ENCODE measurements at regions of chr2 and their contacts with region 1.

Region 1: DNA sequence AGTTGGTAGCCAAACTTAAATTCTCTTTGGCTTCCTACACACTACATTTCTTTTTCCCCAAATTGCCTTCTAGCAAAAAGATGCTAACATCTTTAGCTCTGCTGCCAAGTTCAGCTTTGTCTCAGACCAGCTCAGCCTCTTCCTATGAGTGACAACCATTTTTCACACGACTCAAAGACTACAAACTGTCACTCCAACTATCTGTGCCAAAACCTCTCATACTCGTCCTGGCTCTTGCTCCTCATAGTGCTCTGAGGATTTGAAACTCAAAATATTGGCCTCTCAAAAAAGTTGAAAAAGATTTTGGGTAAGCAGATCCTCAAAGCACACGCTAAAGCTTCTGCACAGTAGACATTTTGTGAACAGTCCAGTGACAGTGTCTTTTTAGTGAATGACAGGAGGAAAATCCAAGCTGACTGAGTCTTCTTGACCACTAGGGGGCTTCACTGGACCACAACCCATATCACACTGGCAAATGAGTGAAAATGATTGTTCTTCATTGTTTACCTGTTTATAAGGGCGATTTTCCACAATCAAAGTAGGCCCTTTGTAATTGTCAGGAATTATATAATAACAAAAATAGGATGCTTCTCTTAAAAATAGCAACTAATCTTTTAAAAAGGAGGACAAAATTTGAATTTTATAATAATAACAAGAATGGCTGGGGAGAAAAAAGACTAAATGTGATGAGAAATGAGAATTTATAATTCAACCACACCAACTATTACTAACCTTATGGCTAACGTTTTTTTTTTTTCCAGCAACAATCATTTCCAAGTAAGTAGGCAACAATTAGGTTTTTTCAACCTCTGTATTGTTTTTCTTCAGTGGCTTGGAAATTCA is 85.5 kb upstream of the PGAP1 start:
- DNase-seq: peak in 5 of 7 donors; percentile 22 to 60 (median 31)
- H3K4me3 ChIP-seq: no peak overlapping the region
- H3K27ac ChIP-seq: no peak overlapping the region
- H3K4me1 ChIP-seq: peaks cover 0 to 4% of the 10 kb centered on the region in 2 donors
- H3K27me3 ChIP-seq: no peaks in the 10 kb centered on the region
- CTCF ChIP-seq: peak; percentile 68 to 81 (median 76)
- POLR2A ChIP-seq: no peak

Region 2: GRCh38 chr2:197184959-197185586 is 173.1 kb after region 1 on chr2:
- intact Hi-C with region 1: loop called in 1 of 2 experiments (anchors 10 kb)
- DNase-seq: peak; percentile 94 to 99 (median 98)
- H3K4me3 ChIP-seq: no peak overlapping the region
- H3K27ac ChIP-seq: peak overlapping the region; percentile 20 to 87 (median 51)
- H3K4me1 ChIP-seq: peaks cover 9 to 24% of the 10 kb centered on the region in 2 donors
- H3K27me3 ChIP-seq: no peaks in the 10 kb centered on the region
- CTCF ChIP-seq: peak in 1 of 6 experiments; percentile 9
- POLR2A ChIP-seq: peak in 1 of 2 donors; percentile 26

Region 3: DNA sequence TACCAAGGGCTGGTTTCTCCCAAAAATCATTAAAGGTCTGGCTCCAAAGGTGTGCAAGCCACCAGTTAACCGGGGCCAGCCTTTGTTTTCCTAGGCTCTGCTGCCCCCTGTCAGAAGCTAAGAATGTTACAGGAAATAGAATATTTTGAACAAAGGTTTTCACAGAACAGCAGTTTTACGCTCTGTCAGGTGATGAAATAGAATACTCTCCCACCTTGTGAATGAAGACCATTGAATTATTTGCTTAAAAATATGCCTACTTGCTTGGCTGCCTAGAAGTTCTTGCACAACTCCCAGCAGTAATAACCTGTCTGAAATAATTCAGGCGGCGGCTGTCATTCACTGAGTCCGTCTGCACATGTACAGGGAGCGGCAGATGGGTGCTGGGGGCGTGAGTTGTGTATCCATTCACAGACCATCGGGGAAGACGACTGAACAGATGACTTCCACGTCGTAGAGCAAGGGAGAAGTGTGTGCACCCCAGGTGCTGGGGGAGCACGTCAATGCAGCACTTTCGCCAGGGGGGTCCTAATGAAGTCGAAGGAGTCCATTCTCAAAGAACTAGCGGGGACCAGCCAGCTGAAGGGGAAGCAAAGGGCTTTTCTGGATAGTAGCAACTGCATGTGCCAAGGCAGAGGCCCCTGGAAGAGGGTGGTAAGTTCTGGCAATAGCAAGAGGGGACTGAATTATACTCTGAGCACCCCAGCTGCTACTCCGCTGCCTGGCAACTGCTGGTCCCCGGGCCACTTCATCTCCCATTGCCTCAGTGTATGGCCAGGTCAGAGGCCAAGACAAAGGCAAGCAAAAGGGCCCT is 366.7 kb after region 1 on chr2:
- intact Hi-C with region 1: loop called in 1 of 2 experiments (anchors 10 kb)
- DNase-seq: peak; percentile 23 to 61 (median 40)
- H3K4me3 ChIP-seq: no peak overlapping the region
- H3K27ac ChIP-seq: no peak overlapping the region
- H3K4me1 ChIP-seq: no peaks in the 10 kb centered on the region
- H3K27me3 ChIP-seq: no peaks in the 10 kb centered on the region
- CTCF ChIP-seq: peak; percentile 43 to 84 (median 79)
- POLR2A ChIP-seq: no peak

Region 4: DNA sequence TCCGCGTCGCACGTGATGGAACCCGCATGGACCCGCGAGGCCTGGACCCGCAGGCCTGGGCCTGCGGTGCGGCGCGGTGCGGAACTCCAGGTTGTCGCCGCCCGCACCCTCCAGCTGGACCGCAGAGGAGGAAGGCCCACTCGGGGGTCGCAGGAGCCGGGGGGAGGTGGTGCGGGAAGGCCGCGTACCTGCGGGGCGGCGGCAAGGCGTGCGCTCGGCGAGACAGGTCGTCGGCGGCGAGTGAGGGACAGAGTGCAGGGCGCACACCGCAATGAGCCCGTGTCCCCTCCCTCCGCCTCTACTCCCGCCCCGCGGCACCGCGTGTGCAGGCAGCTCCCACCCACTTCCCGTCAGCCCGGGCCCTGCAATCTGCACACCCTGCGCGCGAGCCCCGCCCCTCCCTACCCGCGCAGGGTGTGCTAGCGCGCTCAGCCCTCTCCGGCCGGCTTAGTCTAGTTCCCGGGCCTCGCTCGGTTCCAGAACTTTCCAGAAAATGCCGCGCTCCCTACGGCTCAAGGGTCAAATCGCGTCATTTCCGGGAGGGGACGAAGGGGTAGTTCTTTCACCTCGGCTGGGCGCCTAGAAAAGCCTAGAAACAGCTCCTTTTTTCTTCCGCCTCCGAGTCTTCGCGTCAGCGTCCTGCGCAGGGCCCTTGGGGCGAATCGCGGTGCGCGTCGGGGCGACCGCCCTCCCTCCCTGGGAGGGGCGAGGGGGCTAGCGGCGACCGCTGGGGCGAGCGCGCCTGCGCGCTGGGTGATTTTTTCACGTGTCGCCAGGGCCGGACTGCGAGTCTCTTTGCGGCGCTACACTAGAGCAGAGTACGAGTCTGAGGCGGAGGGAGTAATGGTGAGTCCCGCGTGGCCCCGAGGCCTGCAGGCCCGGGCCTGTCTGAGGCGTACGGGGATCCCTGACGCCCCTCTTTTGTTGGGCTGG is 487.8 kb after region 1 on chr2 and contains the starts of genes HSPD1 and HSPE1:
- intact Hi-C with region 1: no loop called
- DNase-seq: peak; percentile 98 to 99 (median 99)
- H3K4me3 ChIP-seq: peak within 1 kb of the TSS; percentile 22 to 76 (median 71)
- H3K27ac ChIP-seq: peak within 1 kb of the TSS; percentile 87 to 99 (median 96)
- H3K4me1 ChIP-seq: peaks cover 32 to 71% of the 10 kb centered on the region in 2 donors
- H3K27me3 ChIP-seq: no peaks in the 10 kb centered on the region
- CTCF ChIP-seq: peak in 3 of 6 experiments; percentile 25 to 64 (median 46)
- POLR2A ChIP-seq: peak; percentile 94 to 96
- total RNA-seq, gene HSPD1: 221 to 3,318 (median 577) TPM
- total RNA-seq, gene HSPE1: 113 to 1,567 (median 190) TPM